ENCODE measurements at regions of chr2 and their contacts with region 1.

Region 1: DNA sequence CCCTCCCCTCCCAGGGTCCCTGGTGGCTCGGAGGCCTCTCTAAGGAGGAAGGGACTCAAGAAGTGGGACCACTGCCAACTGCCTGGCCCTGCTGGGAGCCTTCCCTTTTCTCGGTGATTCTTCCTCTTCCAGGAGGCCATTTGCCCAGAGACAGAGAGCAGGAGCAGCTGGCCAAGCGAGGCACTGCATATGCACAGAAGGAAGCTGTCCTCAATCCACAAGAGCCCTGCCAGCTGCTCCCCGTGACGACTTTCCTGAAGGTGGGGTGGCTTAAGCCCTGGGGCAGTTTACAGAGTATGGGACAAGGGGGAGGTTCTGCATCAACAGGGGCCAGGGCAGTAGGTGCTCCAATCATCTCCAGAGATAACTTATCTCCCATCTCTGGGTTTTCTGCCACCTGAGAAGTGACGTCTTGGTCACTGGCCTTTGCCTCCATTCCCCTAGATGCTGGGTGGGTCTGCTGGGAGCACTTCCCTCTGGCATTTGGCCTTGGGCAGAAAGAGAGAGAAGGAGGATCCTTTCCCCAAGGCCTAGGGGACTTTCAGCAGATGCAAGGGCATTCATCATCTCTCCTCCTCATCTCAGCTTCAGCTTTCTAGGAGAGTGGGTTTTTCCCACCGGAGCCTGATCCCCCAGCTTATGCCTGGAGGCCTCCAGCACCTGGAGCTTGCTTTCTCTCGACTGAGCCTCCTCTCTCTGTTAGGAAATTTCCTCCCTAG is 28.5 kb downstream of the CIB4 start:
- DNase-seq: no peak
- H3K4me3 ChIP-seq: no peak overlapping the region
- H3K27ac ChIP-seq: no peak overlapping the region
- H3K4me1 ChIP-seq: peaks cover 0 to 23% (median 11%) of the 10 kb centered on the region in 4 experiments; a peak in 6 of 7 replicates
- H3K27me3 ChIP-seq: no peaks in the 10 kb centered on the region
- CTCF ChIP-seq: no peak
- EP300 ChIP-seq: no peak
- POLR2A ChIP-seq: no peak
- RAD21 ChIP-seq: no peak

Region 2: GRCh38 chr2:26623541-26624396 is 11.1 kb after region 1 on chr2:
- CTCF ChIA-PET with region 1: interaction called, 10 read pairs
- POLR2A ChIA-PET with region 1: no interaction called
- DNase-seq: no peak
- H3K4me3 ChIP-seq: no peak overlapping the region
- H3K27ac ChIP-seq: no peak overlapping the region
- H3K4me1 ChIP-seq: no peaks in the 10 kb centered on the region; a peak in 2 of 7 replicates
- H3K27me3 ChIP-seq: no peaks in the 10 kb centered on the region; a peak in 1 of 7 replicates
- CTCF ChIP-seq: no peak
- EP300 ChIP-seq: no peak
- POLR2A ChIP-seq: no peak
- RAD21 ChIP-seq: no peak

Region 3: DNA sequence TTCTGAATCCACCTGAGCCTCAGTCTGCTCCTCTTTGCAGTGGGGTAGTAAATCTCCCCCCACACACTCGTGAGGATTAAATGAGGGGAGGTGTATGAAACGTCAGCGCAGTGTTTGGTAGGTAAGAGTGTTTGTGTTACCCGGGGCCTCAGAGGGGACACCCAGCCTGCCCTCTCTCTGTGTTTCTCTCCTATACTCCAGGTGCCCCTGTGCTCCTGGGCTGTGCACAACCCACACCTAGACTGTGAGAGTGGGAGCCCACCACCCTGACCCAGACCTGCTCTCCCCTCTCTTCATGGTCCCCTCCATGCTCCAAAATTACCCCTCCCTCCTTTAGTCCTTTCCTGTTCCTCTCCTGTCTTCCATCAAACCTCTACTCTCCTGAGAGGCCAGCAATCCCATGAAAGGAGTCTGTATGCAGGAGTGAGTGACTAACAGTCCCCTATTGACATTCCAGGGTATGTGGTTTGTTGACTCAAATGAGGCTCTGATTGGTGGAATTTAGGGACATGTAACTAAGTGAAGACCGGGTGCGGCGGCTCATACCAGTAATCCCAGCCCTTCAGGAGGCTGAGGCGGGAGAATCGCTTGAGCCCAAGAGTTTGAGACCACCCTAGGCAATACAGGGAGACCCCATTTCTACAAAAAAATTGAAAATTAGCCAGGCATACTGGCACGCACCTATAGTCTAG is 18.1 kb after region 1 on chr2:
- CTCF ChIA-PET with region 1: interaction called, 10 read pairs
- POLR2A ChIA-PET with region 1: no interaction called
- DNase-seq: no peak
- H3K4me3 ChIP-seq: no peak overlapping the region
- H3K27ac ChIP-seq: no peak overlapping the region
- H3K4me1 ChIP-seq: no peaks in the 10 kb centered on the region
- H3K27me3 ChIP-seq: no peaks in the 10 kb centered on the region; a peak in 1 of 7 replicates
- CTCF ChIP-seq: no peak
- EP300 ChIP-seq: no peak
- POLR2A ChIP-seq: no peak
- RAD21 ChIP-seq: no peak

Region 4: GRCh38 chr2:26712486-26713465 is 100.1 kb after region 1 on chr2:
- CTCF ChIA-PET with region 1: interaction called, 18 read pairs
- POLR2A ChIA-PET with region 1: no interaction called
- DNase-seq: no peak
- H3K4me3 ChIP-seq: no peak overlapping the region
- H3K27ac ChIP-seq: no peak overlapping the region
- H3K4me1 ChIP-seq: no peaks in the 10 kb centered on the region
- H3K27me3 ChIP-seq: no peaks in the 10 kb centered on the region; a peak in 1 of 7 replicates
- CTCF ChIP-seq: no peak
- EP300 ChIP-seq: no peak
- POLR2A ChIP-seq: no peak
- RAD21 ChIP-seq: no peak

Measured in H1 (cell line).